Activated CD4-positive, alpha-beta T cell treated with anti-CD3 and anti-CD28 coated beads for 36 hours (primary cell): ENCODE measurements at regions of chr6 and their contacts with region 1.

Region 1: DNA sequence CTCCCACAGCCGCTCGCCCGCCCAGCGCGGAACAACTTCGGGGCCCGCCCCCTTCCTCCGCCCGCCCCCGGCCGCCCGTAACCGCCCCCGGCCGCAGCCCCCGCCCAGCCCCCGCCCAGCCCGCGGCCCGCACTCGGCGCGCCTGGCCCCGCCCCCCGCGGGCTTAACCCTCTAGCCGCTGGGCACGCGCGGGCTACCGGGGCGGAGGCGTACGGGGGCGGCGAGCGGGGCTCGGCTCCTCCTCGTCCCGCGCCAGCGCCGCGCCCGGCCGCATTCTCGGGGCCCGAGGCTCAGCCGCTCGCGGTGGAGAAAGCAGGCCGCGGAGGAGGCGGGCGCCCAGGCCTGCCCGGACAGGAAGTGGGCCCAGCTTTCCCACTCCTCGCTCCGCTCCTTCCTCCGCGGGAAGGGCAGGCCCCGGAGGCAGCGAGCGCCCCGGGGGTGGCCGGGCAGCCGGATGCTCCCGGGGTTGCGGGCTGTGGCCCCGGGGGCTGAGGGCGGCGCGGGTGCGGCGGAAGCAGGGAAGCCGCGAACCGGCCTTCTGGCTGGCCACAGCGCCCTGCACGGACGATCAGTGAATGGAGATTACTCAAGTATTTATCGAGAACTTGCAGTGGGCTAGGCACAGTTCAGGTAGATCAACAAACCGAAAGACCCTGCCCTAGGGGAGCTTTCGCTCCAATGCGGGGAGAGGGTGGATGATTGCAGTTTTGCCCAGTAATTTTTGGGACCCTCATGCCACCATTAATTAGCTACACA is at the start of gene TRAM2:
- DNase-seq: peak; percentile 78
- ATAC-seq: peak; percentile 56
- H3K4me3 Mint-ChIP-seq: peak within 1 kb of the TSS; percentile 79
- H3K27ac Mint-ChIP-seq: peak within 1 kb of the TSS; percentile 80
- H3K4me1 Mint-ChIP-seq: peaks cover 43% of the 10 kb centered on the region
- H3K27me3 Mint-ChIP-seq: peaks cover 2% of the 10 kb centered on the region
- total RNA-seq, gene TRAM2: 3.5 to 3.6 TPM

Region 2: DNA sequence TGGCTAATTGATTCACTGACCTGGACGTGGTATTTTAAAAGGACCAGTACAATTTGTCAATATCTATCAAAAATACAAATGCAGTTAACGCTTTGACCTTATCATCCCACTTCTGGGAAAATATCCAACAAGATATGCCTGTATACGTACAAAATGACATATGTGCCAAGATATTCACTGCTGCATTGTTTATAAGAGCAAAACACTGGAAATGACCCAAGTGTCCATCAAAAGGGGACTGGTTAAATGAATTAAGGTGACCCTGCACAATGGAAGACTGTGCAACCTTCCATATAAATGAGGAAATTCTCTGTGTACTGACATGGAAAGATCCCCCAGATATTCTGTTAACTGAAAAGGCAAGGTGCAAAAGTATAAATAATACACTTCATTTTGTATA is 14.3 kb before region 1 on chr6:
- CTCF ChIA-PET with region 1: no interaction called
- POLR2A ChIA-PET with region 1: no interaction called
- intact Hi-C with region 1: no loop called
- DNase-seq: no peak
- ATAC-seq: no peak
- H3K4me3 Mint-ChIP-seq: no peak overlapping the region
- H3K27ac Mint-ChIP-seq: no peak overlapping the region
- H3K4me1 Mint-ChIP-seq: peaks cover 16% of the 10 kb centered on the region
- H3K27me3 Mint-ChIP-seq: no peaks in the 10 kb centered on the region

Region 3: GRCh38 chr6:52598123-52598823 is 21.1 kb after region 1 on chr6:
- CTCF ChIA-PET with region 1: interaction called, 15 read pairs
- POLR2A ChIA-PET with region 1: no interaction called
- intact Hi-C with region 1: no loop called
- DNase-seq: peak; percentile 59
- ATAC-seq: peak; percentile 63
- H3K4me3 Mint-ChIP-seq: no peak overlapping the region
- H3K27ac Mint-ChIP-seq: no peak overlapping the region
- H3K4me1 Mint-ChIP-seq: peaks cover 16% of the 10 kb centered on the region
- H3K27me3 Mint-ChIP-seq: peaks cover 5% of the 10 kb centered on the region

Region 4: DNA sequence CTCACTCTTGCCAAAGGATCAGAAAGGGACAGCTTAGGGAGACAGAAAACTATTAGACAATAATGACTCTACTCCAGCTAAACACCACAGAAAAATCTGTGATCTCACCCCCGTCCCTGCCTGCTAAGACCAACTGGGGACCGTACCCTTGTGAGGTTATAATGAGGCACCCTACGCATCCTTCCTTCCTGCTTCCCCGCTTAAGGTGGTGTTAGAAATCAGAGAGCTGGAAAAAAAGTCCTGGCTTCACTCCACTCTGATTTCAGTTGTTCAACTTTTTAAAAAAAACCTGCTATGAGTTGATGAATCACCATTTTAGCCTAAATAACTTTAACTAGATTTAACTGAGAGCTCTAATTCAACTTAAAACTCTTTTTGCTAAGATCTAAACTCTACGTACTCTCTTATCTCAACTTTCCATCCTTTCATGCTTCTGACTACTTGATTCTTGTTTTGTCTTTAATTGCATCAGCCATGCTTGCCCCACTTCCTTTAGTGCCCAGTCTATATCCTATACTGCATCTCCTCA is 57.9 kb after region 1 on chr6:
- CTCF ChIA-PET with region 1: interaction called, 3 read pairs
- POLR2A ChIA-PET with region 1: no interaction called
- intact Hi-C with region 1: loop called in 1 of 2 experiments (anchors 2 kb)
- DNase-seq: peak; percentile 62
- ATAC-seq: peak; percentile 93
- H3K4me3 Mint-ChIP-seq: peak overlapping the region; percentile 24
- H3K27ac Mint-ChIP-seq: peak overlapping the region; percentile 87
- H3K4me1 Mint-ChIP-seq: peaks cover 18% of the 10 kb centered on the region
- H3K27me3 Mint-ChIP-seq: peaks cover 6% of the 10 kb centered on the region

Region 5: DNA sequence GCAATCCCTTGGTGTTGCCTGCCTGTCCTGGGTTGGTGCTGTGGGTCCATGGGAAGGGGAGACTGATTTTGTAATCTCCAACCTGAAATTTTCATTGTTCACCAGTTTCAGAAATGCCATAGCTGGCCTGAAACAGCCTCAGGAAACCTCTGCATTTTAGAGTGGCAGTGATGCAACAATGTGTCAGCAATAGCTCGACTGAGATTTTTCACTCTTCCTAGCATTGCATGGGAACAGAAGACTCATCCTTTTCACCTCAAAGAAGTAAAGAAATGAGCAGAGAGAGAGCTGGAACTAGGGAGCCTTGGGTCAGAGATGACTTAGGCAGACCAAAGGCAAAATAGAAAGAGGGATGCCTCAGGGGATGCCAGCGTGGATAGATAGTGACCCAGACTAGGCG is 70.0 kb after region 1 on chr6:
- CTCF ChIA-PET with region 1: interaction called, 12 read pairs
- POLR2A ChIA-PET with region 1: no interaction called
- intact Hi-C with region 1: no loop called
- DNase-seq: no peak
- ATAC-seq: peak; percentile 46
- H3K4me3 Mint-ChIP-seq: no peak overlapping the region
- H3K27ac Mint-ChIP-seq: peak overlapping the region; percentile 53
- H3K4me1 Mint-ChIP-seq: peaks cover 17% of the 10 kb centered on the region
- H3K27me3 Mint-ChIP-seq: peaks cover 5% of the 10 kb centered on the region

Region 6: DNA sequence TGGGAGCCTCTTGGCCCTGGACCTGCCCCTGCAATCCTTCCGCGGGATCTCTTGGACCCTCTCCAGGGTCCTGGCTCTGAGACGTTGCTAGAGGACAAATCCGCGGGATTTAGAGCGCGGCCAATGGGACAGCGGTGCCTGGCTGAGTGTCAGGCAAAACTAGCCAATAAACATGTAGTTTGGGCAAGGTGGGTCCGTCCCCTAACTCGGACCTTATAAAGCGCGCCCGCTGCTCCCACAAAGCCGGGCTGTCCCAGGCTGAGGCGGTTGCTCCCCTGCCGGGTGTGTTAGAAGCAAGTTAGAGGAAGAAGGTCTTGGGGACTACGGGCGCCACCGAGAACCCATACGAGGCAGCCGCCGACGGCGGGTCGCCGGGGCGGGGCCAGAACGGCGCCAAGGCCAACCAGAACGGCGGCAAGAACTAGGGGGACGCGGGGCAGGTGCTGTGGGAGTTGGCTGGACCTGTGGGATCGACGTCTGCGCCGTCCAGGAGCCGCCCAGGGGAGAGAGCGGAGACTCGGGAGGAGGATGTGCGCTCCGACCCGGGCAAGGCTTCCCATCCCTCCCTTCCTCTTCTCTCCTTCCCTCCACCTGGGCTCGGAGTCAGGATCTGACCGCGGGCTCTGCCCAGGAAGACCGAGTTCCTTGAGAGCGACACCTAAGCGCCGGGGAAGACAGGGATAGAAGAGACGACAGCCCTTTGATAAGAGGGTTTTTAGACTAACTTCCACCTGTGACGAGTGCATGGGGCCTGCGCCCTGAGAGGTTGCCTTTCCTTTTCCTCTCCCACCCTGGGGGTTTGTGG is 87.2 kb after region 1 on chr6:
- CTCF ChIA-PET with region 1: interaction called, 3 read pairs
- POLR2A ChIA-PET with region 1: no interaction called
- intact Hi-C with region 1: loop called (anchors 1 to 2 kb)
- DNase-seq: peak; percentile 86
- ATAC-seq: peak; percentile 99
- H3K4me3 Mint-ChIP-seq: no peak overlapping the region
- H3K27ac Mint-ChIP-seq: no peak overlapping the region
- H3K4me1 Mint-ChIP-seq: peaks cover 11% of the 10 kb centered on the region
- H3K27me3 Mint-ChIP-seq: no peaks in the 10 kb centered on the region

Region 7: DNA sequence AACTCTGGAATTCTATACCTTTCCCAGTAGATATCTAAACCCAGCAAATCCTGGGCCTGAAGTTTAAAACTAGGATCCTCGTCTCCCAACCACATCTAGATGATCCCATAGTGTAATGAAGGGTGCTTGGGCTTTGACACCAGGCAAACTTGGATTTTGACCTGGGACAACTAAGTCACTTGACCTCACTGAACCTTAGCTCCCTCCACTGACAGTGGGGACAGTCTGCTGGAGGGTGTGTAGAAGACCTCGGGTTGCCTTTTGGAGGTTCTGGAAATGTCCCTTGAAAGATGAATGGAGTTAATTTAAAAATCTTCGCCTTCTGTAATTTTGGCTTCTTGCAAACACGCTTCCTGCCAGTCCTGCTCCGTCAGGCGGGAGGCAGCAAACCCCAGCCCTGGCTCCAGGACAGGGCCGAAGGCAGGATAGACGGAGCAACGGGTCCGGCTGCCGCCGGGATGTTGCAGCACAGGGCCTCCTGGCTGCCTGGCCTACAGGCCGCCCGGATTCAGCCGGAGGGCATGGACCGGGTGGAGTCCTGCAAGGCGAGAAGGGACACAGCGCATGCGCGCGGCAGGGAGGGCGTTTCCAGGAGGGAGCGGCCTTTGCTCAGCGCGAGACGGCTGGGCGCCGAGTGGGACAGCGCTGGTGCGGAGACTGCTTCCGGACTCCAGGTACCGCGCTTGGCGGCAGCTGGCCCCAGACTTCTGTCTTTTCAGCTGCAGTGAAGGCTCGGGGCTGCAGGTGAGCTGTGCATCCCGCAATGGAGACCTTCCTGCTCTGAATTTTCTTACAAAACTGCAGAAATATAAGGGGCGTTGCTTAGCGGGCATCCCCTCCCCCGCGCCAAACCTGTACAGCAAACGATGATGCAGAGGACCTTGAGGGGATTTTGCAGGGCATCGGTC is 93.6 kb after region 1 on chr6 and contains the start of gene TMEM14A:
- CTCF ChIA-PET with region 1: interaction called, 4 read pairs
- POLR2A ChIA-PET with region 1: no interaction called
- intact Hi-C with region 1: loop called (anchors 1 to 2 kb)
- DNase-seq: peak; percentile 96
- ATAC-seq: peak; percentile 99
- H3K4me3 Mint-ChIP-seq: peak within 1 kb of the TSS; percentile 81
- H3K27ac Mint-ChIP-seq: peak within 1 kb of the TSS; percentile 81
- H3K4me1 Mint-ChIP-seq: peaks cover 46% of the 10 kb centered on the region
- H3K27me3 Mint-ChIP-seq: no peaks in the 10 kb centered on the region
- total RNA-seq, gene TMEM14A: 10.4 to 18.8 TPM

Region 8: DNA sequence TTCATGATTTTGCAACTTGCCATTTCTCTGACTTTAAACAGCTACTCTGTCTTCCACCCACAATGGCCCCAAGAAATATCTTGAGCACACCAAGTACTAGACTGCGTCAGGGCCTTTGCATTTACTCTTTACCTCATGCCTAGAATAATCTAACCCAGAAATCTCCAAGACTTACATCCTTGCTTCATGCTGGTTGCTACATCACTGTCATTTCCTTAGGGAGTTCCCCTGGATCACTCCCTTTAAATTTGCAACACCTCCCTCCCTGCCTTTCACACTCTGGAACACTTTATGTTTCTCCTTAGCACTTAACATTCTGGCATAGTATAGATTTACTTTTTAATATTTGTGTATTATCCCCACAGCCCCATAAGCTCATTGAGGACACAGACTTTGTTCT is 776.4 kb after region 1 on chr6:
- CTCF ChIA-PET with region 1: no interaction called
- POLR2A ChIA-PET with region 1: no interaction called
- intact Hi-C with region 1: loop called in 1 of 2 experiments (anchors 5 kb)
- DNase-seq: no peak
- ATAC-seq: no peak
- H3K4me3 Mint-ChIP-seq: no peak overlapping the region
- H3K27ac Mint-ChIP-seq: no peak overlapping the region
- H3K4me1 Mint-ChIP-seq: peaks cover 19% of the 10 kb centered on the region
- H3K27me3 Mint-ChIP-seq: no peaks in the 10 kb centered on the region